ENCODE measurements at regions of chr12 and their contacts with region 1.

Region 1: GRCh38 chr12:43221216-43221615 is 330.8 kb downstream of the ADAMTS20 start:
- DNase-seq: no peak
- ATAC-seq: no peak
- H3K4me3 ChIP-seq: no peak overlapping the region
- H3K27ac ChIP-seq: no peak overlapping the region
- H3K4me1 ChIP-seq: no peaks in the 10 kb centered on the region
- H3K27me3 ChIP-seq: peaks cover 8% of the 10 kb centered on the region
- CTCF ChIP-seq: no peak
- POLR2A ChIP-seq: no peak
- RAD21 ChIP-seq: no peak

Region 2: GRCh38 chr12:42834062-42834461 is 387.2 kb before region 1 on chr12:
- CTCF ChIA-PET with region 1: no interaction called
- POLR2A ChIA-PET with region 1: interaction called, 16 read pairs
- dilution Hi-C with region 1: no loop called
- in situ Hi-C with region 1: no loop called
- intact Hi-C with region 1: no loop called
- DNase-seq: no peak
- ATAC-seq: no peak
- H3K4me3 ChIP-seq: no peak overlapping the region
- H3K27ac ChIP-seq: no peak overlapping the region
- H3K4me1 ChIP-seq: no peaks in the 10 kb centered on the region
- H3K27me3 ChIP-seq: no peaks in the 10 kb centered on the region
- CTCF ChIP-seq: no peak
- POLR2A ChIP-seq: no peak
- RAD21 ChIP-seq: no peak

Region 3: GRCh38 chr12:43282106-43282505 is 60.9 kb after region 1 on chr12:
- CTCF ChIA-PET with region 1: no interaction called
- POLR2A ChIA-PET with region 1: no interaction called
- dilution Hi-C with region 1: no loop called
- in situ Hi-C with region 1: no loop called
- intact Hi-C with region 1: no loop called
- DNase-seq: peak; percentile 65
- ATAC-seq: peak; percentile 22; the same call in 1 of the 2 replicates
- H3K4me3 ChIP-seq: no peak overlapping the region
- H3K27ac ChIP-seq: no peak overlapping the region
- H3K4me1 ChIP-seq: peaks cover 6% of the 10 kb centered on the region; the same call in 1 of the 2 replicates
- H3K27me3 ChIP-seq: no peaks in the 10 kb centered on the region
- CTCF ChIP-seq: peak; percentile 69
- POLR2A ChIP-seq: no peak
- RAD21 ChIP-seq: peak; percentile 78

Measured in IMR-90 (cell line).